Ovary (tissue), 10 donors: ENCODE measurements at regions of chr15 and their contacts with region 1.

Region 1: GRCh38 chr15:35330048-35330695 is 215.8 kb downstream of the DPH6 start:
- DNase-seq: no peak
- H3K4me3 ChIP-seq: no peak overlapping the region
- H3K27ac ChIP-seq: no peak overlapping the region
- H3K4me1 ChIP-seq: no peaks in the 10 kb centered on the region
- H3K27me3 ChIP-seq: no peaks in the 10 kb centered on the region
- CTCF ChIP-seq: no peak
- EP300 ChIP-seq: no peak
- POLR2A ChIP-seq: no peak

Region 2: DNA sequence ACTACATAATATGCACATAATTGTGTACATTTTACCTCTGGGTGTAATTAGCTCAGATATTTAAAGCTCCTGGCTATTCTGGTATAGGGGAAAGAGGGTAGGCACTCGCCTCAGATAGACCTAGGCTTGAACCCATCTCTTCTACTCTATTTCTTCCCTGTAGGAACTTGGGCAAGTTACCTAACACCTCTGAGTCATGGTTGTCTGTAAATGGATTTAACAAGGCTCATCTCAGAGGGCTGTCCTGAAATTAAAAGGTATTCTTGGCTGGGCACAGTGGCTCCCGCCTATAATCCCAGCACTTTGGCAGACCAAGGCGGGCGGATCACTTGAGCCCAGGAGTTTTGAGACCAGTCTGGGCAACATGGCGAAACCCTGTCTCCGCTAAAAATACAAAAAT is 275.8 kb before region 1 on chr15:
- intact Hi-C with region 1: no loop called
- DNase-seq: no peak
- H3K4me3 ChIP-seq: no peak overlapping the region
- H3K27ac ChIP-seq: no peak overlapping the region
- H3K4me1 ChIP-seq: no peaks in the 10 kb centered on the region
- H3K27me3 ChIP-seq: no peaks in the 10 kb centered on the region
- CTCF ChIP-seq: no peak
- EP300 ChIP-seq: no peak
- POLR2A ChIP-seq: no peak

Region 3: GRCh38 chr15:35211240-35211902 is 118.8 kb before region 1 on chr15:
- intact Hi-C with region 1: no loop called
- DNase-seq: no peak
- H3K4me3 ChIP-seq: no peak overlapping the region
- H3K27ac ChIP-seq: no peak overlapping the region
- H3K4me1 ChIP-seq: no peaks in the 10 kb centered on the region
- H3K27me3 ChIP-seq: no peaks in the 10 kb centered on the region
- CTCF ChIP-seq: no peak
- EP300 ChIP-seq: no peak
- POLR2A ChIP-seq: no peak

Region 4: GRCh38 chr15:35393403-35393802 is 63.2 kb after region 1 on chr15:
- intact Hi-C with region 1: loop called in 1 of 4 experiments (anchors 10 kb)
- DNase-seq: no peak
- H3K4me3 ChIP-seq: no peak overlapping the region
- H3K27ac ChIP-seq: no peak overlapping the region
- H3K4me1 ChIP-seq: no peaks in the 10 kb centered on the region
- H3K27me3 ChIP-seq: no peaks in the 10 kb centered on the region
- CTCF ChIP-seq: no peak
- EP300 ChIP-seq: no peak
- POLR2A ChIP-seq: no peak